Activated CD4-positive, alpha-beta T cell treated with anti-CD3 and anti-CD28 coated beads, Interleukin-2, amount 10 ng/mL, durations not matched to agents 7 days and 5 days (primary cell): ENCODE measurements at regions of chr6 and their contacts with region 1.

Region 1: DNA sequence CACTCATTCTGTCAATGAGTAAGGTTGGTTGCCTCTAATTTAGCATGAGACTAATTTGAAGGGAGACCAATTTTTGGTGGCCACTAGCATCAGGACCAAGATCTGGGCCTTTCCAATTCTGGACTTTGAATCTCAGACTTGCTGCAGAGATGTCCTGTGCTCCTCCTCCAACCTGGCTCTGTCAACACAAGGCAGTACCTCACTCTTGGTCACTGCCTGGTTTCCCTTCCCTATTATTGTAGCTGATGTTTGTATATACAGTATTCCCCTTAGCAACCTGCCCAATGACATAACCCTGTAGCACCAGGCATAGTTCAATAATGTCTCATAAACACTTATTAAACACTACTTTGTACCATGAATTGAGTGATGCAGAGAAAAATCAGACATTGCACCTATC is 50.4 kb downstream of the UNC5CL start:
- DNase-seq: no peak
- H3K4me3 Mint-ChIP-seq: no peak overlapping the region
- H3K27ac Mint-ChIP-seq: no peak overlapping the region
- H3K4me1 Mint-ChIP-seq: no peaks in the 10 kb centered on the region
- H3K27me3 Mint-ChIP-seq: peaks cover 48% of the 10 kb centered on the region

Region 2: GRCh38 chr6:40804905-40805304 is 183.7 kb before region 1 on chr6:
- CTCF ChIA-PET with region 1: no interaction called
- POLR2A ChIA-PET with region 1: no interaction called
- DNase-seq: no peak
- H3K4me3 Mint-ChIP-seq: no peak overlapping the region
- H3K27ac Mint-ChIP-seq: no peak overlapping the region
- H3K4me1 Mint-ChIP-seq: no peaks in the 10 kb centered on the region
- H3K27me3 Mint-ChIP-seq: no peaks in the 10 kb centered on the region

Region 3: DNA sequence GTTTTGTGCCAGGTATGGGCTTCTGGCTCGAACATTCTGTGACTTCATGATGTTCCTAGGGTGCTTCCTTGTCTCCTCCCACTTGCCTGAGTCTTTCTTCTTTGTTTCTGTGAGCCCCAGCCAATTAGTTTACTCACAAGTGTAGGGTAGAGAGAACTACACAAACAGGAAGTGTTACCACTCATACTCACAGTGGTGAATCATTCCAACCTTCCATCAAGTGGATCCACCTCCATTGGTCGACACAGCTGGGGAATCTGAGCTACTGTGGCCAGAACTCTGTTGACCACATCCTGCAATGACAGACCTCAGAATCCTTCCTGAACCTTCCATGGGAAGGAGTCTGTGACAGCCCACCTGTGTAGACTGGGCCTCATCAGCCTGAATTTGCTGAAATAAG is 26.4 kb before region 1 on chr6:
- CTCF ChIA-PET with region 1: no interaction called
- POLR2A ChIA-PET with region 1: no interaction called
- DNase-seq: peak; percentile 30
- H3K4me3 Mint-ChIP-seq: no peak overlapping the region
- H3K27ac Mint-ChIP-seq: peak overlapping the region; percentile 73
- H3K4me1 Mint-ChIP-seq: peaks cover 23% of the 10 kb centered on the region
- H3K27me3 Mint-ChIP-seq: no peaks in the 10 kb centered on the region

Region 4: DNA sequence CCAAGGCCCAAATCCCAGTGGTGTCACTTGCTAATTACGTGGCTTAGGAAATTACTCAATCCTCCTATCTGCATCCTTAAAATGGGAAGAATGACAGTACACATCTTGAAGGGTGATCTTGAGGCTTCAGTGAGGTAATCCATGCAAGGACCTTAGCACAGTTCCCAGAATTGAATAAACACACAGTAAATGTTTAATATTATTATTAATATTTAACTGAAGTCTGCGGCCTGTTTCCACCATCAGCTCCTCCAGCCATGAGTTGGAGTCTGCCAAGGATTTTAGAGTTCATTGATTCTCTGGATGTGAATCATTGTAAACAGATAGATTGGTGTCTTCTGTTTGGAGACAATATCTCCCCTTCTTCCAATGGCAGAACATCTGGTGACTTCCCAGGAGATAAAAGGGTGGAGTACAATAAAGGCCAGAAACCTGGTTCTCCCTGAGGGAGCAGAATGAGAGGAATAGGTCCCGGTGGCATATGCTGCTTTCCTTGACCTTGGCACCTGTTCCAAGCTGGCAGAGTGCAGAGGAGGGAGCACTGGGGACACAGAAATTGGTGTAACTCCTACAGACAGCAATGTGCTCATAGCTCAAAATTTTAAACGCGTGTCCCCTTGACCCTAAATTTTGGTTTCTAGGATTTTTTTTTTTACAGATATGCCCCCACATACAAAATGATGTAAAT is 25.0 kb after region 1 on chr6:
- CTCF ChIA-PET with region 1: interaction called, 10 read pairs
- POLR2A ChIA-PET with region 1: no interaction called
- DNase-seq: no peak
- H3K4me3 Mint-ChIP-seq: no peak overlapping the region
- H3K27ac Mint-ChIP-seq: no peak overlapping the region
- H3K4me1 Mint-ChIP-seq: no peaks in the 10 kb centered on the region
- H3K27me3 Mint-ChIP-seq: peaks cover 6% of the 10 kb centered on the region